ENCODE measurements at regions of chr20 and their contacts with region 1.

Region 1: GRCh38 chr20:50790651-50791277 is 4.1 kb upstream of the BCAS4 start:
- DNase-seq: peak; percentile 83

Region 2: DNA sequence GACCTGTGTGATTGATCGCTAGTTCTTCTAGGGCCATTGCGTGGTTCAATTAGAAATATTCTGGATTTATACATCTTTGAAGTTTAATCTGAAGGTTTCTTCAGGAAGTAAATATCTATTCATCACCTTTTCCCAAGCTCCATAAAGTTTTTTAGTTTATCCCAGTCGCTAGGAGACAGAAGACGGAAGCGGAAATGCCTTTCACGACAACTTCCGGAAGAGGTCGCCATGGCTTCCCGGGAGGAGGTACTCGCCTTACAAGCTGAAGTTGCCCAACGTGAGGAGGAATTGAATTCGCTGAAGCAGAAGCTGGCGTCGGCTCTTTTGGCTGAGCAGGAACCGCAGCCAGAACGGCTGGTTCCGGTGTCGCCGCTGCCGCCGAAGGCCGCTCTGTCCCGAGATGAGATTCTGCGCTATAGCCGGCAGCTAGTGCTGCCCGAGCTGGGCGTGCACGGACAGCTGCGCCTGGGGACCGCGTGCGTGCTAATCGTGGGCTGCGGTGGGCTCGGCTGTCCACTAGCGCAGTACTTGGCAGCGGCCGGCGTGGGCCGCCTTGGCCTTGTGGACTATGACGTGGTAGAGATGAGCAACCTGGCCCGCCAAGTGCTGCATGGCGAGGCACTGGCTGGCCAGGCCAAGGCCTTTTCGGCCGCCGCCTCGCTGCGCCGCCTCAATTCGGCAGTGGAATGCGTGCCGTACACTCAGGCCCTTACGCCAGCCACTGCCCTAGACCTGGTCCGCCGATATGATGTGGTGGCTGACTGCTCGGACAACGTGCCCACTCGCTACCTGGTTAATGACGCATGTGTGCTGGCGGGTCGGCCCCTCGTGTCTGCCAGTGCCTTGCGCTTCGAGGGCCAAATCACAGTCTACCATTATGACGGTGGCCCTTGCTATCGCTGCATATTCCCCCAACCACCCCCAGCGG is 168.1 kb after region 1 on chr20 and contains the start of gene MOCS3:
- CTCF ChIA-PET with region 1: interaction called, 5 read pairs
- POLR2A ChIA-PET with region 1: interaction called, 13 read pairs
- DNase-seq: peak; percentile 82

Region 3: DNA sequence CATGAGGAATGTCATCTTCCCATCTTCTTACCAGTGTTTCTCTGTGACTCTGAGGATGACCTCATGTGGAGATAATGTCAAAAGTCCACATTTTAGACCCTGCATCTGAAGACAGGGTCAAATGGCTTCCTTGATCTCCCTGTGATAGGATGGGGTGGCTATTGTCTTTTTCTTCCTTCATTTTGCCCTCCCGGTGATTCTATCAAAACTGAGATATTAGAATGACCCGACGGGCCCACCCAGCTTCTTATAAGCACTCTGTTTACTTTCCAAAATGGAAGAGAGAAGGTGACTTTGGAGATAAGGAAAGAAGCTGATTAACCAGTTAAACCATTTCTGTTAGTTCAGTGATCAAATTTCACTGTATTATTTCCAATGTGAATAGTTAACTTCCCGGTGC is 1127.3 kb after region 1 on chr20:
- CTCF ChIA-PET with region 1: interaction called, 11 read pairs
- POLR2A ChIA-PET with region 1: no interaction called
- DNase-seq: no peak